MCF 10A (cell line): ENCODE measurements at regions of chr1 and their contacts with region 1.

Region 1: GRCh38 chr1:28369371-28370238 is at the start of gene PHACTR4:
- DNase-seq: peak; percentile 92
- H3K4me3 Mint-ChIP-seq: peak within 1 kb of the TSS; percentile 91
- H3K27ac Mint-ChIP-seq: peak within 1 kb of the TSS; percentile 76
- H3K4me1 Mint-ChIP-seq: peaks cover 14% of the 10 kb centered on the region
- H3K27me3 Mint-ChIP-seq: no peaks in the 10 kb centered on the region
- CTCF ChIP-seq: no peak
- total RNA-seq, gene PHACTR4: 50.7 and 56.4 TPM in 2 replicates

Region 2: DNA sequence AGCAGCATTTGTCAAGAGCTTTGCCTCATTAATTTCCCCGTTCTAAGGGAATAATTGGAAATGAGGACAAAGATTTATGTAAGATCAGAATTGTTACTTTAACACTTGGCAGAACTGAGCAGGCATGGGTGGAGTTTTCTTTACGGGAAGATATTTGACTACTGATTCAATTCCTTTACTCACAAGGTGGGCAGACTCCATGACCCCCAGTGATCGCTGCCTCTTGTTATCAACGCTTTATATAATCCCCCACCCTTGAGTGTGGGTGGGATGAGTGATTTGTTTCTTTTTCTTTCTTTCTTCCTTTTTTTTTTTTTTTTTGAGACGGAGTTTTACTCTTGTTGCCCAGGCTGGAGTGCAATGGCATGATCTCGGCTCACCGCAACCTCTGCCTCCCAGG is 1291.6 kb before region 1 on chr1:
- CTCF ChIA-PET with region 1: no interaction called
- POLR2A ChIA-PET with region 1: no interaction called
- intact Hi-C with region 1: no loop called
- DNase-seq: no peak
- H3K4me3 Mint-ChIP-seq: no peak overlapping the region
- H3K27ac Mint-ChIP-seq: no peak overlapping the region
- H3K4me1 Mint-ChIP-seq: no peaks in the 10 kb centered on the region
- H3K27me3 Mint-ChIP-seq: peaks cover 17% of the 10 kb centered on the region
- CTCF ChIP-seq: no peak

Region 3: GRCh38 chr1:28354121-28354520 is 15.5 kb before region 1 on chr1:
- CTCF ChIA-PET with region 1: interaction called, 21 read pairs
- POLR2A ChIA-PET with region 1: interaction called, 10 read pairs
- intact Hi-C with region 1: no loop called
- DNase-seq: peak; percentile 37
- H3K4me3 Mint-ChIP-seq: no peak overlapping the region
- H3K27ac Mint-ChIP-seq: peak overlapping the region; percentile 81
- H3K4me1 Mint-ChIP-seq: peaks cover 5% of the 10 kb centered on the region
- H3K27me3 Mint-ChIP-seq: no peaks in the 10 kb centered on the region
- CTCF ChIP-seq: no peak

Region 4: DNA sequence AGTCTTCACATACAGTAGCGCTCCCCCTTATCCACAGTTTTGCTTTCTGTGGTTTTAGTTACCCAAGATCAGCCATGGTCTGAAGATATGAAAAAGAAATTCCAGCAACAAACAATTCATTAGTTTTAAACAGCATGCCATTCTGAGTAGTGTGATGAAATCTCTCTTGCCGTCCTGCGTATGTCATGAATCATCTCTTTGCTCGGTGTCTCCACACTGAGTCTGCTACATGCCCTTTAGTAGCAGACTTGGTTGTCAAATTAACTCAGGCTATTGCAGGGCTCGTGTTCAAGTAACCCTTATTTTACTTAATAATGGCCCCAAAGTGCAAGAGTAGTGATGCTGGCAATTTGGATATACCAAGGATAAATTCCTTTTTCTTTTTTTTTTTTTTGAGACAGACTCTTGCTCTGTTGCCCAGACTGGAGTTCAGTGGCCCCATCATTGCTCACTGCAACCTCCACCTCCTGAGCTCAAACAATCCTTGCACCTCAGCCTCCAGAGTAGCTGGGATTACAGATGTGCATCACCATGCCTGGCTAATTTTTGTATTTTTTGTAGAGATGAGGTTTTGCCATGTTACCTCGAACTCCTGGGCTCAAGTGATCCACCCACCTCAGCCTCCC is 22.5 kb after region 1 on chr1:
- CTCF ChIA-PET with region 1: interaction called, 3 read pairs
- POLR2A ChIA-PET with region 1: interaction called, 11 read pairs
- intact Hi-C with region 1: no loop called
- DNase-seq: peak; percentile 88
- H3K4me3 Mint-ChIP-seq: peak overlapping the region; percentile 65
- H3K27ac Mint-ChIP-seq: peak overlapping the region; percentile 88
- H3K4me1 Mint-ChIP-seq: peaks cover 11% of the 10 kb centered on the region
- H3K27me3 Mint-ChIP-seq: no peaks in the 10 kb centered on the region
- CTCF ChIP-seq: no peak

Region 5: GRCh38 chr1:28428012-28428411 is 58.4 kb after region 1 on chr1:
- CTCF ChIA-PET with region 1: no interaction called
- POLR2A ChIA-PET with region 1: no interaction called
- intact Hi-C with region 1: no loop called
- DNase-seq: no peak
- H3K4me3 Mint-ChIP-seq: no peak overlapping the region
- H3K27ac Mint-ChIP-seq: no peak overlapping the region
- H3K4me1 Mint-ChIP-seq: peaks cover 5% of the 10 kb centered on the region
- H3K27me3 Mint-ChIP-seq: no peaks in the 10 kb centered on the region
- CTCF ChIP-seq: no peak